H1 (cell line): ENCODE measurements at regions of chr15 and their contacts with region 1.

Region 1: DNA sequence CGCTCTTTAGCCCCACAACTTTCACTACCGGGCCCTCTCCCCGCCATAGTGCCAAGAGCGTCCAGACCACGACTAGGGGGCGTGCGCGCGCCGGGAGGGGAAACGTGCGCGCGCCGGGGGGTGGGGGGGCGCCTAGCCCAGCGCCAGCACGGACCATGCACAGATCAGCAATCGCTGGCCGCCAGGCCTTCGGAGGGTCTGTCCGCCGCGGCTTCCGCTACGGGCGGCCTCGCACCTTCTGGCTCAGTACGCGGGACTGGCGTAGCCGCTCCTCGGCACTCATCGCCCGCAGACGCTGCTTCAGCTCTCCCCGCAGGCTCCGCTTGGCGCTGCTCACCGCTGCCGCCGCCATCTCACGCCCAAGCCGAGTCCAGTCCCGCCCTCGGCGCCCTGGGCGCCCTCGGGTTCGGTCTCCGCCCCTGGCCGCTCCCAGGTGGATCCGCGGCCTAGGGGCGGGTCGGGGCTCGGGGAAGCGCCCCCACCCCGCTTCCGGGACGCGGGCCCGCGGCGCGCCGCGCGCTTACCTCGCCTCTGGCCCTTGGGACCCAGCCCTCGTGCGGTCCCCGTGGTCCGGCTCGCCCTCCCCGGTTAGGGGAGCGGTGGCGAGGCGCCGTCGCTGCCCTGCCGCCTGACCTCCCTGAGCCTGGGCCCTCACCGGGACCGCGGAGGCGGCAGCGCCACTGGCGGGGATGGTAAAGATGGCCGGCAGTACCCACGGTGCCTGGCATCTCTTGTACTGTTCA is at the start of gene MTHFS:
- DNase-seq: peak; percentile 49 to 87
- H3K4me3 ChIP-seq: peak within 1 kb of the TSS; percentile 62 to 75 (median 72)
- H3K27ac ChIP-seq: peak within 1 kb of the TSS; percentile 92
- H3K4me1 ChIP-seq: peaks cover 0 to 3% (median 0%) of the 10 kb centered on the region in 4 experiments; a peak in 2 of 7 replicates
- H3K27me3 ChIP-seq: no peaks in the 10 kb centered on the region
- CTCF ChIP-seq: peak; percentile 38 to 50 (median 49)
- EP300 ChIP-seq: peak in 1 of 2 experiments; percentile 38; a peak in 1 of 3 replicates
- POLR2A ChIP-seq: peak; percentile 81 to 92
- RAD21 ChIP-seq: peak; percentile 42 to 53
- total RNA-seq, gene MTHFS: 36.2 and 37.2 TPM in 2 replicates

Region 2: DNA sequence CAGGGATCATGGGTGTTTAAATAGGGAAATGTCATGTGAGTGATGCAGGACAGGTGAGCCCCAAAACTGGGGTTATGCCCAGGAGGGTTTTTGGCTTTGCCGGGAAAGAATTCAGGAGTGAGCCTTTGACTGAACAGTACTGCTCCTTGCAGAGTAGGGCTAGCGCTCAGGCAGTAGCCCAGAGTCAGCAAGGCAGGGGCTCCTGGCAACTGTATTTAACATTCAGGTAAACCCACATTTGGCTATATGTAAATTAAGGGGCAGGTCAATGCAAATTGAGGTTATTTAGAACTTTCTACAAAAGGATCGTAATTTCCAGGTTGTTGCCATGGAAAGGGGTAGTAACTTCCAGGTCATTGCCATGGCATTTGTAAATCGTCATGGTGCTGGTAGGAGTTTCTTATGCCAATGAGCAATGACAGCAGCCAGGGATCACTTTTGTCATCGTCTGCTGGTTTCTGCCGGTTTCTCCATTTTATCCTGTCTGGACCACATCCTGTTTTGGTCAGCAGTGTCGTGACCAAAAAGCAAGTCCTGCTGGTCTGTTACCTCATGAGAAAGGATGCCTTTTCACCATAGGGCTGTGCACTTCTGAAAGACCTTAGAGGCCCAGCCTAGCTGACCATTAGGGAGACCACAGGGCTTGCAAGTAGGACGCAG is 24.3 kb before region 1 on chr15:
- CTCF ChIA-PET with region 1: no interaction called
- POLR2A ChIA-PET with region 1: no interaction called
- DNase-seq: no peak
- H3K4me3 ChIP-seq: no peak overlapping the region
- H3K27ac ChIP-seq: no peak overlapping the region
- H3K4me1 ChIP-seq: no peaks in the 10 kb centered on the region
- H3K27me3 ChIP-seq: no peaks in the 10 kb centered on the region
- CTCF ChIP-seq: no peak
- EP300 ChIP-seq: no peak
- POLR2A ChIP-seq: no peak
- RAD21 ChIP-seq: no peak

Region 3: GRCh38 chr15:79916502-79917132 is 19.8 kb after region 1 on chr15:
- CTCF ChIA-PET with region 1: interaction called, 3 read pairs
- POLR2A ChIA-PET with region 1: interaction called, 42 read pairs
- DNase-seq: no peak
- H3K4me3 ChIP-seq: no peak overlapping the region
- H3K27ac ChIP-seq: no peak overlapping the region
- H3K4me1 ChIP-seq: peaks cover 0 to 27% (median 8%) of the 10 kb centered on the region in 4 experiments; a peak in 5 of 7 replicates
- H3K27me3 ChIP-seq: no peaks in the 10 kb centered on the region
- CTCF ChIP-seq: no peak
- EP300 ChIP-seq: no peak
- POLR2A ChIP-seq: no peak
- RAD21 ChIP-seq: no peak